Ascending aorta (tissue), 2 donors: ENCODE measurements at regions of chr1 and their contacts with region 1.

Region 1: GRCh38 chr1:113904674-113905434 is at the starts of genes AP4B1 and DCLRE1B:
- DNase-seq: peak; percentile 97 to 99
- H3K4me3 ChIP-seq: peak within 1 kb of the TSS; percentile 85 to 86
- H3K27ac ChIP-seq: peak within 1 kb of the TSS; percentile 86 to 92
- H3K4me1 ChIP-seq: peaks cover 0 to 17% of the 10 kb centered on the region in 2 donors
- H3K27me3 ChIP-seq: no peaks in the 10 kb centered on the region
- CTCF ChIP-seq: peak; percentile 53 to 82 (median 69)
- total RNA-seq, gene AP4B1: 3.2 TPM
- total RNA-seq, gene DCLRE1B: 1.9 TPM

Region 2: DNA sequence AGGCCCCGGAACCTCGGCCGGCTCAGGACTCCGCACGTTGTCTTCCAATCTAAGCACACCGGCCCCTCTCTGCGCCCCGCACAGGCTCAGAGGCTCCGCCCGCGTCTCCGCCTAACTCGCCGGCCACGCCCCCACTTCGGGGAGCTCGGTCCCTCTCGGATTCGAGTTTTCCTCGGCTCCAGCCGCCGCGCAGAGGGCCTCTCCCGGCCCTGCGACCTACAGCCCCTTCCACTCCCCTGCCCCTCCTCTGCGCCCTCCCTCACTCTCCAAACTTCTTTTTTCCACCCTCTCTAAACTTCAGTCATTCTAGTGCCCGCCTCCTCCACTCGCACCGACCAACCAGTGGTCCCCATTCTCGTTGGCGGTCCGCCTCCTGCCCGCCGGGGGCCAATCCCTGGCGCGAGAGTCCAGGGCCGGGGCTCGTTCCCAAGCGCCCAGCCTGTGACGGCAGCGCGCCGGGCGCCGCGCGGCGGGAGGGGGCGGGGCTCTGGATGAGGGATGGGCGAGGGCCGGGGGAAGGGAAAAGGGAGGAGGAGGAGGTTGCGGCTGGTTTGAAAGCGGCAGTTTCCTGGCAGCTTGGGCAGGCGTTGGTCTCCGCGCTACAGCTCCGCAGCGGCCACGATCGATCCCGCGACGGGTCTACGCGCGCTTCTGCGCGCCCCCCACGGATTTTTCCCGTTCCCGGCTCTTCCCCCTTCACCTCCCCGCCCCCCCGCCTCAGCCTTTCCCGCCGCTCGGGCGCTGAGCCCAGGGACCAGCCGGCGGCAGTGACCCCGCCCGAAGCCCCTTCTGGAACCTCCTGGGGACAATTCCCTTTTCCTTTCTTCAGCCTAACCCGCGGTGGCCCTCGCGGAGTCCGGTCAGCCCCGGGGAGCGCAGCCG is 514.7 kb before region 1 on chr1 and contains the start of gene MAGI3:
- intact Hi-C with region 1: loop called (anchors 5 kb)
- DNase-seq: peak; percentile 87 to 98
- H3K4me3 ChIP-seq: peak within 1 kb of the TSS; percentile 96 to 99
- H3K27ac ChIP-seq: peak within 1 kb of the TSS; percentile 89 to 91
- H3K4me1 ChIP-seq: peaks cover 5 to 6% of the 10 kb centered on the region in 2 donors
- H3K27me3 ChIP-seq: no peaks in the 10 kb centered on the region
- CTCF ChIP-seq: no peak
- total RNA-seq, gene MAGI3: 14.9 TPM

Region 3: GRCh38 chr1:113759333-113760101 is 145.3 kb before region 1 on chr1 and contains the start of gene PHTF1:
- intact Hi-C with region 1: loop called (anchors 2 kb)
- DNase-seq: peak; percentile 16 to 86
- H3K4me3 ChIP-seq: peak within 1 kb of the TSS; percentile 85 to 86
- H3K27ac ChIP-seq: peak within 1 kb of the TSS; percentile 97 to 99
- H3K4me1 ChIP-seq: peaks cover 0 to 7% of the 10 kb centered on the region in 2 donors
- H3K27me3 ChIP-seq: no peaks in the 10 kb centered on the region
- CTCF ChIP-seq: no peak
- total RNA-seq, gene PHTF1: 38.6 TPM

Region 4: GRCh38 chr1:113811888-113812660 is 92.8 kb before region 1 on chr1 and contains the start of gene RSBN1:
- intact Hi-C with region 1: loop called (anchors 1 kb)
- DNase-seq: peak; percentile 99 to 100
- H3K4me3 ChIP-seq: peak within 1 kb of the TSS; percentile 82 to 91
- H3K27ac ChIP-seq: peak within 1 kb of the TSS; percentile 95 to 97
- H3K4me1 ChIP-seq: peaks cover 0 to 5% of the 10 kb centered on the region in 2 donors
- H3K27me3 ChIP-seq: no peaks in the 10 kb centered on the region
- CTCF ChIP-seq: peak in 1 of 3 experiments; percentile 7
- total RNA-seq, gene RSBN1: 22.7 TPM

Region 5: DNA sequence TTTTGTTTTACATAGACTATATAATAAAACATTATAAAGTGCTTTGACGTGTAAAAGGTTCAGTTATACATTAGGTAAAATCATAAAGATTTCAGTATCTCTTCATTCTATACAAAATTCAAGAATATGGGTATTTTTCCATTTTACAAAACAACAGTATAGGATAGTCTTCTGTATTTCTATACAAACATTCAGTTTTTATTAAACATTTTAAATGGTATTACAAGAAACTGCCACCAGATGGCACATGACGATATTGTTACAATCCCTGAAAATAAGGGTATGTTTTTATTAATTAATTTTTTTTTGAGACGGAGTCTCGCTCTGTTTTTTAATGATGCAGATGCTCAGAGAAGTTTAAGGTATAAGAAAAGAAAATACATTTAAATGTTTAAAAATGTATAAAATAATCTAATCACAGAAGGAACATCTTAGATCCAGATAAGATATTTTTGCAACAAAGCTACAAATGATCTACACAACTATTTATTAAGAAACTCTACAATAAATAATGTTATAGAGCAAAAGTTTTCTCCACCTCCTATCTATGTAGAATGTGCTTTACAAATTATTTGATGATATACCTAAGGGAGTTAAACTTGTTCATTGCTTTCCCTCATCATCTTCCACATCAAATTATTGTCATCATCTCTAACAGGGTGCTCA is 69.1 kb before region 1 on chr1:
- intact Hi-C with region 1: loop called (anchors 2 kb)
- DNase-seq: no peak
- H3K4me3 ChIP-seq: no peak overlapping the region
- H3K27ac ChIP-seq: no peak overlapping the region
- H3K4me1 ChIP-seq: no peaks in the 10 kb centered on the region
- H3K27me3 ChIP-seq: no peaks in the 10 kb centered on the region
- CTCF ChIP-seq: peak; percentile 45 to 62 (median 46)

Region 6: GRCh38 chr1:113858418-113858817 is 46.4 kb before region 1 on chr1:
- intact Hi-C with region 1: no loop called
- DNase-seq: no peak
- H3K4me3 ChIP-seq: no peak overlapping the region
- H3K27ac ChIP-seq: no peak overlapping the region
- H3K4me1 ChIP-seq: no peaks in the 10 kb centered on the region
- H3K27me3 ChIP-seq: no peaks in the 10 kb centered on the region
- CTCF ChIP-seq: no peak

Region 7: DNA sequence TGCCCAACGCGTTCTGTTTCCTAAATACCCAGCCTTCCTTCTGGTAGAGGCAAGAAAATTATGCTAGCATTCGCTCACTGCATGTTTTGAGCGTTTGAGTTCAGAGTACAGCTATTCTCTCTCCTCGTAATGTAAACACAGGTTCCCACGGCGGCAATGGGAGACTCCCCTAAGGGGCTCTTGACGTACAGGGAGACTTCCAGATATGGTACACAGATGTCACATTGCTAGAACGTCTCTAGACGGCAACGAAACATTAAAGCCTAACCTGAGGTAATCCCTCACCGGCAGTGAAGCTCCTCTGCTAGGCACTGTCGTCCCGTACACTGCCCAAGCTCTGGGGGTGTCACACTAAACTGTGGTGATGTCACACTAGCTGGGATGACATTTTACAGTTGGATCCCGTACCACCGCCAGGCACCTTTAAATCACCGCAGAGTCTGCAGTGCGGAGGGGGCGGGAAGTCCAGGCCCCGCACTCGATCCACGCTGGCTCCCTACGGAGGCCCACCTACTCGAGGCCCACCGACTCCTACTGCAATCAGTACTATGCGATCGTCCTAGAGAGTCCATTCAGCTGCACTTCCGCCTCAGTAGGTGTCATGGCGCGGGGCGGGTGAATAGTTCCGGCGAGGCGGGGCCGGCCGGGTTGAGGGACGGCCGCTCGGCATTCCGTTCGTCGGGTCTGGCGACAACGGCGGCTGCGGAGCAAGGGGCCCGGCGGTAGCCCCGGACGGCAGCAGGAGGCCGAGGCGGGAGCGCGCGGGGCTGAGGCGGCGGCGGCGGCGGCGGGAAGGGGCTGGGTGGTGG is 24.3 kb after region 1 on chr1 and contains the start of gene HIPK1:
- intact Hi-C with region 1: loop called (anchors 1 kb)
- DNase-seq: peak; percentile 67 to 96
- H3K4me3 ChIP-seq: peak within 1 kb of the TSS; percentile 83 to 90
- H3K27ac ChIP-seq: peak within 1 kb of the TSS; percentile 92 to 94
- H3K4me1 ChIP-seq: peaks cover 4 to 33% of the 10 kb centered on the region in 2 donors
- H3K27me3 ChIP-seq: no peaks in the 10 kb centered on the region
- CTCF ChIP-seq: peak in 1 of 3 experiments; percentile 35
- total RNA-seq, gene HIPK1: 41.7 TPM

Region 8: GRCh38 chr1:114511032-114511785 is 606.4 kb after region 1 on chr1 and contains the start of gene TRIM33:
- intact Hi-C with region 1: loop called (anchors 10 kb)
- DNase-seq: peak; percentile 39 to 94
- H3K4me3 ChIP-seq: peak within 1 kb of the TSS; percentile 78 to 92
- H3K27ac ChIP-seq: peak within 1 kb of the TSS; percentile 91 to 98
- H3K4me1 ChIP-seq: peaks cover 0 to 24% of the 10 kb centered on the region in 2 donors
- H3K27me3 ChIP-seq: no peaks in the 10 kb centered on the region
- CTCF ChIP-seq: peak in 1 of 3 experiments; percentile 15
- total RNA-seq, gene TRIM33: 42.5 TPM